ENCODE measurements at regions of chr4 and their contacts with region 1.

Region 1: GRCh38 chr4:110654254-110654635 is 31.4 kb upstream of the PITX2 start:
- DNase-seq: peak in 1 of 2 experiments; percentile 27
- H3K4me3 ChIP-seq: no peak overlapping the region
- H3K4me3 Mint-ChIP-seq: peak overlapping the region; percentile 44
- H3K27ac Mint-ChIP-seq: peak overlapping the region; percentile 83
- H3K4me1 ChIP-seq: peaks cover 33% of the 10 kb centered on the region
- H3K4me1 Mint-ChIP-seq: peaks cover 26% of the 10 kb centered on the region
- H3K27me3 ChIP-seq: no peaks in the 10 kb centered on the region
- H3K27me3 Mint-ChIP-seq: no peaks in the 10 kb centered on the region
- CTCF ChIP-seq: no peak

Region 2: DNA sequence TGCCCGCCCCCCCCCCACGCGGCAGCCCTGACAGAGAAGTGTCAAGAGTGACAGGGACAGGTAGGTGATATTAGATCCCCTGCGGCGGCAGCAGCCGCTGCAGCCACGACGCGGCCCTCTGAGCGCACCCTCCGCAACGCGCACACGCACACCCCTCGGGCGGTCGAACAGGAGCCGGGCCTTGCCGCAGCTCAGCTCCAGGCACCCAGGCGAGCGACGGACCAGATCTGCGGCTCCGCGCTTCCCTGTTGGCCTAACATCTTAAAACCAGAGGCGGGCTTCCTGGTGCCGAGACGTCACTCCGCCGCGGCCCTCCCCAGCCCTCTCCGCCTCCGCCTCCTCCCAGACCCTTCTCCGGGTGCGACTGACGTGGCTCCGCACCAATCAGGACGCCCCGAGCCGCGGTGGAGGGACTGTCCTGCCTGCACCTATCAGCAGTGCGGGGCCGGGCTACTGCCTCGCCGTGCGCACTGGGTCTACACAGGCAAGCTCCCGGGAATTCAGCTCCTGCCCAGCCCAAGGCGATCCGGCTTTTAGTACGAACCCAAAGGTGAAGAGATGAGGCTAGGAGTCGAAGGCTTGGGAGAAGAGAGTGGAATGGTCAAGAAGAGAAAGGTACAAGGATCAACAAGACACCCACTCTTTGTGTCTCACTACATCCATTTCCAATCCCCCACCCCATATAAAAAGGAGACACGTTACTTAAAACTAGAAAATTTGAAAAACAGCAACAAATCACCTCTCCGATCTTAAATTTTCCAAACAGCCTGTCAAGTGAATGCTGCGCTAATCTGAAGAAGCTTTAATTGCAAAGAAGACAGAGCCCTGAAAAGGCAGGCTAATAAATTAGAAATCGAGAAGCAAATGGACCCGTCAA is 31.2 kb before region 1 on chr4 and contains the start of gene PITX2:
- CTCF ChIA-PET with region 1: no interaction called
- POLR2A ChIA-PET with region 1: no interaction called
- intact Hi-C with region 1: loop called (anchors 2 kb)
- DNase-seq: peak; percentile 99
- H3K4me3 ChIP-seq: peak within 1 kb of the TSS; percentile 58
- H3K4me3 Mint-ChIP-seq: peak within 1 kb of the TSS; percentile 92
- H3K27ac Mint-ChIP-seq: peak within 1 kb of the TSS; percentile 86
- H3K4me1 ChIP-seq: peaks cover 44% of the 10 kb centered on the region
- H3K4me1 Mint-ChIP-seq: peaks cover 47% of the 10 kb centered on the region
- H3K27me3 ChIP-seq: no peaks in the 10 kb centered on the region
- H3K27me3 Mint-ChIP-seq: no peaks in the 10 kb centered on the region
- CTCF ChIP-seq: no peak
- total RNA-seq, gene PITX2: 76.8 and 82.8 TPM in 2 replicates

Region 3: DNA sequence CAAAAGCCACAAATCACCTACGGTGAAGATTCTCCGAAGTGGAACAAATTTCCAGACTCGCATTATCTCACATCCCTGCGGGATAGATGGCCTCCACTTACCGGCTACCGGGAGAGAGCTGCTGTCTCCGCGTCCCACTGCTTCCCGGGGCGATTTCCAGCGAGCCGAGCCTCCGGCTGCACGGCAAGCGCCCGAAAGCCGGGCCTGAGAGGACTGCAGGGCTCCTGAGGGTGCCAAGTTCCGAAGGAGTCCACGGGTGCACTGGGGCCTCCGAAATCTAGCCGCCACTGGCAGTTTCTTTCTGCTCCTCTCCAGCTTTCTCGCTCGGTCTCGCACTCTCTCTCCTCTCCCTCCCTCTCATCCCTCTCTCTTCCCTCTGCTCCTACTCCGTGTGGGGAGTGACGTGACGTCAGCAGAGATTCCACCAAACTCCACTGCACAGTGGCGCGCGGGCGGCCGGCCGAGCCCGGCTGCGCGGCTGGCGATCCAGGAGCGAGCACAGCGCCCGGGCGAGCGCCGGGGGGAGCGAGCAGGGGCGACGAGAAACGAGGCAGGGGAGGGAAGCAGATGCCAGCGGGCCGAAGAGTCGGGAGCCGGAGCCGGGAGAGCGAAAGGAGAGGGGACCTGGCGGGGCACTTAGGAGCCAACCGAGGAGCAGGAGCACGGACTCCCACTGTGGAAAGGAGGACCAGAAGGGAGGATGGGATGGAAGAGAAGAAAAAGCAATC is 17.4 kb before region 1 on chr4:
- CTCF ChIA-PET with region 1: no interaction called
- POLR2A ChIA-PET with region 1: no interaction called
- intact Hi-C with region 1: loop called (anchors 1 kb)
- DNase-seq: peak; percentile 86
- H3K4me3 ChIP-seq: peak overlapping the region; percentile 73
- H3K4me3 Mint-ChIP-seq: peak overlapping the region; percentile 88
- H3K27ac Mint-ChIP-seq: peak overlapping the region; percentile 93
- H3K4me1 ChIP-seq: 0 out of 2 replicates have a peak, but pooled peaks cover 8% of the 10 kb centered on the region
- H3K4me1 Mint-ChIP-seq: peaks cover 20% of the 10 kb centered on the region
- H3K27me3 ChIP-seq: no peaks in the 10 kb centered on the region
- H3K27me3 Mint-ChIP-seq: no peaks in the 10 kb centered on the region
- CTCF ChIP-seq: no peak

Region 4: GRCh38 chr4:110644008-110644407 is 10.2 kb before region 1 on chr4:
- CTCF ChIA-PET with region 1: no interaction called
- POLR2A ChIA-PET with region 1: no interaction called
- intact Hi-C with region 1: loop called (anchors 1 kb)
- DNase-seq: peak; percentile 53 to 66
- H3K4me3 ChIP-seq: no peak overlapping the region
- H3K4me3 Mint-ChIP-seq: peak overlapping the region; percentile 60
- H3K27ac Mint-ChIP-seq: peak overlapping the region; percentile 58
- H3K4me1 ChIP-seq: peaks cover 45% of the 10 kb centered on the region
- H3K4me1 Mint-ChIP-seq: peaks cover 46% of the 10 kb centered on the region
- H3K27me3 ChIP-seq: no peaks in the 10 kb centered on the region
- H3K27me3 Mint-ChIP-seq: no peaks in the 10 kb centered on the region
- CTCF ChIP-seq: no peak

Region 5: GRCh38 chr4:110793890-110794554 is 139.8 kb after region 1 on chr4:
- CTCF ChIA-PET with region 1: no interaction called
- POLR2A ChIA-PET with region 1: no interaction called
- intact Hi-C with region 1: loop called (anchors 5 kb)
- DNase-seq: no peak
- H3K4me3 ChIP-seq: no peak overlapping the region
- H3K4me3 Mint-ChIP-seq: no peak overlapping the region
- H3K27ac Mint-ChIP-seq: peak overlapping the region; percentile 13
- H3K4me1 ChIP-seq: peaks cover 32% of the 10 kb centered on the region
- H3K4me1 Mint-ChIP-seq: peaks cover 36% of the 10 kb centered on the region
- H3K27me3 ChIP-seq: no peaks in the 10 kb centered on the region
- H3K27me3 Mint-ChIP-seq: no peaks in the 10 kb centered on the region
- CTCF ChIP-seq: no peak